ENCODE measurements at regions of chr17 and their contacts with region 1.

Region 1: GRCh38 chr17:49290690-49291359 is 60.2 kb upstream of the PHOSPHO1 start:
- DNase-seq: no peak
- H3K4me3 ChIP-seq: no peak overlapping the region
- H3K27me3 ChIP-seq: no peaks in the 10 kb centered on the region
- CTCF ChIP-seq: peak; percentile 75

Region 2: DNA sequence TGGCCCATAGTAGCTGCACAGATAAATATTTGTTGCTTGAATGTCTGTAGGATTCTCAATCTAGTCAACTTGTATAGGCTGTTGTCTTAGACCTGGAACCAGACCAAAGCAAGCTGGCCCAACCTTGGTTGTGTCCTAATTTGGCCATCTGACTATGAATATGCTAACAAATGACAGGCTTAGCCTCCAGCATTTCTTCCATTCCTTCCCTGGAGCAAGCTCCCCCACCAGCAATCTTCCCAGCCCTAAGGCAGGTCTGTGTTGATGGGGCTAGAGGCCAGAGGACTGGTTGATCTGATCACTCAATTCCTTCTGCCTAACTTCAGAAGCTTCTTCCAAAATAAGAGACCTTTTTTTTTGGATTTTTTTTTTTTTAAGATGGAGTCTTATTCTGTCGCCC is 50.9 kb before region 1 on chr17:
- CTCF ChIA-PET with region 1: no interaction called
- POLR2A ChIA-PET with region 1: no interaction called
- DNase-seq: no peak
- H3K4me3 ChIP-seq: no peak overlapping the region
- H3K27me3 ChIP-seq: peaks cover 6% of the 10 kb centered on the region
- CTCF ChIP-seq: no peak

Region 3: GRCh38 chr17:49260011-49260921 is 30.6 kb before region 1 on chr17:
- CTCF ChIA-PET with region 1: interaction called, 12 read pairs
- POLR2A ChIA-PET with region 1: no interaction called
- DNase-seq: peak; percentile 50
- H3K4me3 ChIP-seq: peak overlapping the region; percentile 40
- H3K27me3 ChIP-seq: no peaks in the 10 kb centered on the region
- CTCF ChIP-seq: no peak

Region 4: GRCh38 chr17:49277638-49278037 is 13.2 kb before region 1 on chr17:
- CTCF ChIA-PET with region 1: interaction called, 21 read pairs
- POLR2A ChIA-PET with region 1: no interaction called
- DNase-seq: no peak
- H3K4me3 ChIP-seq: no peak overlapping the region
- H3K27me3 ChIP-seq: 0 out of 2 replicates have a peak, but pooled peaks cover 2% of the 10 kb centered on the region
- CTCF ChIP-seq: no peak

Region 5: GRCh38 chr17:49337884-49338283 is 47.1 kb after region 1 on chr17:
- CTCF ChIA-PET with region 1: no interaction called
- POLR2A ChIA-PET with region 1: no interaction called
- DNase-seq: no peak
- H3K4me3 ChIP-seq: no peak overlapping the region
- H3K27me3 ChIP-seq: no peaks in the 10 kb centered on the region
- CTCF ChIP-seq: no peak

Region 6: GRCh38 chr17:49361902-49362722 is 71.3 kb after region 1 on chr17 and contains the start of gene ZNF652:
- CTCF ChIA-PET with region 1: no interaction called
- POLR2A ChIA-PET with region 1: no interaction called
- DNase-seq: peak; percentile 39
- H3K4me3 ChIP-seq: peak within 1 kb of the TSS; percentile 98
- H3K27me3 ChIP-seq: no peaks in the 10 kb centered on the region
- CTCF ChIP-seq: no peak
- polyA plus RNA-seq, gene ZNF652: 5.3 and 7.2 TPM in 2 replicates

Measured in BJ (cell line).